ENCODE measurements at regions of chr10 and their contacts with region 1.

Region 1: DNA sequence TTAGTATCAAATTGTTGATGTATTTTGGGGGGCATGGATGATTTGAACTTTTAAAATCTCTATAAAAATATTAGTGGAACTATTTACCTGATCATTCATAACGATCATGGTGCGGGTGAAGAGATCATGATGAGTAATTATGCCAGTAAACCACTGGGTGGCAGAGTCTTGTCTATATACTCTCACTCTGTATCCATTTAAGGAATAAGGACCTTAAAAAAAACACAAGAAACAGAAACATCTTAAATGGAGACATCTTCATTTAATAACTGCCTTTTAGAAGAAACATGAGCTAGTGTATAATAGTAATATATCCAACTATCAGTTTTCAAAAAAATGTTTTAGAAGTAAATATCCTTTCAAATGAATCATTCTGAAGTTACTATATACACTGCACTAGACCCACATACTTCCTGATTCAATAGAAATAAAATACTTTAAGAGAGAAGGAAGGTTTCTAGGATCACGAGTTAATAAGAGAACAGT is 84.0 kb downstream of the NRBF2 start:
- DNase-seq: peak in 7 of 9 donors; percentile 45 to 72 (median 61)
- ATAC-seq: peak; percentile 86
- H3K4me3 ChIP-seq: no peak overlapping the region
- H3K4me3 Mint-ChIP-seq: peak overlapping the region in 7 of 10 donors; percentile 2 to 56 (median 35)
- H3K27ac ChIP-seq: no peak overlapping the region
- H3K27ac Mint-ChIP-seq: peak overlapping the region in 8 of 9 donors; percentile 29 to 88 (median 56)
- H3K4me1 ChIP-seq: peaks cover 17 to 24% of the 10 kb centered on the region in 2 donors
- H3K4me1 Mint-ChIP-seq: peaks cover 38 to 64% (median 61%) of the 10 kb centered on the region in 7 donors
- H3K27me3 ChIP-seq: no peaks in the 10 kb centered on the region
- H3K27me3 Mint-ChIP-seq: no peaks in the 10 kb centered on the region

Region 2: GRCh38 chr10:63236113-63236935 is 19.2 kb after region 1 on chr10:
- CTCF ChIA-PET with region 1: no interaction called
- POLR2A ChIA-PET with region 1: no interaction called
- intact Hi-C with region 1: loop called in 1 of 2 experiments (anchors 2 kb)
- DNase-seq: no peak
- ATAC-seq: peak; percentile 82
- H3K4me3 ChIP-seq: no peak overlapping the region
- H3K4me3 Mint-ChIP-seq: peak overlapping the region in 4 of 10 donors; percentile 14 to 51 (median 40)
- H3K27ac ChIP-seq: no peak overlapping the region
- H3K27ac Mint-ChIP-seq: peak overlapping the region in 4 of 9 donors; percentile 5 to 73 (median 20)
- H3K4me1 ChIP-seq: peaks cover 35 to 36% of the 10 kb centered on the region in 2 donors
- H3K4me1 Mint-ChIP-seq: peaks cover 33 to 82% (median 65%) of the 10 kb centered on the region in 7 donors
- H3K27me3 ChIP-seq: no peaks in the 10 kb centered on the region
- H3K27me3 Mint-ChIP-seq: no peaks in the 10 kb centered on the region

Region 3: GRCh38 chr10:63388421-63389031 is 171.4 kb after region 1 on chr10:
- CTCF ChIA-PET with region 1: interaction called, 3 read pairs
- POLR2A ChIA-PET with region 1: no interaction called
- intact Hi-C with region 1: loop called in 1 of 2 experiments (anchors 5 kb)
- DNase-seq: peak in 6 of 9 donors; percentile 20 to 60 (median 47)
- ATAC-seq: peak; percentile 77
- H3K4me3 ChIP-seq: peak overlapping the region; percentile 36
- H3K4me3 Mint-ChIP-seq: peak overlapping the region; percentile 42 to 81 (median 72)
- H3K27ac ChIP-seq: peak overlapping the region; percentile 5
- H3K27ac Mint-ChIP-seq: peak overlapping the region; percentile 21 to 76 (median 49)
- H3K4me1 ChIP-seq: peaks cover 12 to 21% of the 10 kb centered on the region in 2 donors
- H3K4me1 Mint-ChIP-seq: peaks cover 45 to 79% (median 69%) of the 10 kb centered on the region in 7 donors
- H3K27me3 ChIP-seq: no peaks in the 10 kb centered on the region
- H3K27me3 Mint-ChIP-seq: no peaks in the 10 kb centered on the region

Region 4: DNA sequence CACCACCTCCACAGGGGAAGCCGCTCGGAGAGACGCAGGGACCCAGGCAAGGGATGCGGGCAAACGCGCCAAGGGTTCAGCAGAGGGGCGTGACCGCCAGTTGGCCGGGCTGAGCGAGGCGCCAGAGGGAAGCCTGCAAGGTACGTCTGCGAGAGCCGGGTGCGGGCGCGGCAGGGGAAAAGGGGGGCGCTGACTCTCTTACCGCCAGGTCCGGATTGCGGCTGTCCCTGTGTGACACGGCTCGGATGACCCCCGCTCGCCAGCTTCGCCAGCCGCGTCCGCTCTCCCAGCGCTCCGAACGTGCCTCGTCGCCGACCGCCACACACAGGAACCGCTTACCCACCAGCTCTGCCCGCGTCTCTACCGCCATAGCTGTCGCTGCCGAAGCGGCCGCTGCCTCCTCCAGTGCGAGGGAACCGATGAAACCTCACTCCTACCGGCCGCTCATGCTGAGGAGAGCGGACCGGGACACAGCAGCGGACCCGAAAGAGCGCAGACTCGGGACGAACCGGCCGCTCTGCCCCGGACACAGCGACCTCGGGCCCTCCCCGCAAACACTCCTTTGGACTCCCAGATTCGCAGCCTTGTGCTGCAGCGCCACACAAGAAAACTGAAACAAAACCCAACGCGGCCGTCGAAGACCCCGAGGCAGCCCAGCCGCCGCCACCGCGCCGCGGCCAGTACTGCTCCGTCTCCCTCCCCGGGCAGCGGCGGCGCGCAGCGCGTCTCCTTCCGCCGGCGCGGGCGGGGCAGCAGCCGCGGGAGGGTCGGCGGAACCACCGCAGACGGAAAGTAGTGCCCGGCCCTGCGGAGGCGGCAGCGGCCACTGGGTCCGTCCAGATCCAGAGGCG is 248.4 kb after region 1 on chr10 and contains the start of gene JMJD1C:
- CTCF ChIA-PET with region 1: interaction called, 3 read pairs
- POLR2A ChIA-PET with region 1: no interaction called
- intact Hi-C with region 1: loop called (anchors 1 to 5 kb)
- DNase-seq: peak; percentile 49 to 72 (median 63)
- ATAC-seq: peak; percentile 85
- H3K4me3 ChIP-seq: peak within 1 kb of the TSS; percentile 89
- H3K4me3 Mint-ChIP-seq: peak within 1 kb of the TSS; percentile 88 to 98 (median 95)
- H3K27ac ChIP-seq: peak within 1 kb of the TSS; percentile 86
- H3K27ac Mint-ChIP-seq: peak within 1 kb of the TSS; percentile 68 to 97 (median 94)
- H3K4me1 ChIP-seq: peaks cover 0 to 16% of the 10 kb centered on the region in 2 donors
- H3K4me1 Mint-ChIP-seq: peaks cover 14 to 68% (median 34%) of the 10 kb centered on the region in 7 donors
- H3K27me3 ChIP-seq: no peaks in the 10 kb centered on the region
- H3K27me3 Mint-ChIP-seq: peaks cover 0 to 31% (median 0%) of the 10 kb centered on the region in 5 donors
- total RNA-seq, gene JMJD1C: 67.6 to 331 (median 137) TPM

Region 5: DNA sequence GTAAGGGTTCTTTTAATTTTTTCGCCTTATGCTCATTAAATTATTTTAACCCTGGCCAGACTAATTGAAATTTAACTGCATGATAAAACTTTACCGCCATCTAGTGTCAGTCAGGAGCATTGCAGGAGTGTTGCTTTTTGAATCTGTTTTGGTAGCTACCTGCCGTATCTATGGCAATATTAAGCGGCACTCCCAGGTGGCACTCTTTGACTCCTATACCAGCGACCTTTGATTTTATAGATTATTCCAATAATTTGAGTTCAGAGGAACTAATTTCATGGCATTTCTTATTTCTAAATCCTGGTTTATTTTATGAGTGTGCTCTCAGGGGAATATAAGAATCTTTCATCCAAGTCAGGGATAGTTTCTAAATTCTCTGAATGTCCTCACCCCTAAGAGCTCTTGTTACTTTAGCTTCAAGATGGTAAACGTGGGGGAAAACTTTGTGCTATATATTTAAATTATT is 502.9 kb after region 1 on chr10:
- CTCF ChIA-PET with region 1: interaction called, 16 read pairs
- POLR2A ChIA-PET with region 1: no interaction called
- intact Hi-C with region 1: loop called (anchors 1 kb)
- DNase-seq: peak in 8 of 9 donors; percentile 33 to 74 (median 63)
- ATAC-seq: peak; percentile 87
- H3K4me3 ChIP-seq: no peak overlapping the region
- H3K4me3 Mint-ChIP-seq: peak overlapping the region in 3 of 10 donors; percentile 8 to 63 (median 16)
- H3K27ac ChIP-seq: no peak overlapping the region
- H3K27ac Mint-ChIP-seq: peak overlapping the region in 5 of 9 donors; percentile 1 to 71 (median 68)
- H3K4me1 ChIP-seq: no peaks in the 10 kb centered on the region
- H3K4me1 Mint-ChIP-seq: peaks cover 0 to 22% (median 7%) of the 10 kb centered on the region in 7 donors
- H3K27me3 ChIP-seq: no peaks in the 10 kb centered on the region
- H3K27me3 Mint-ChIP-seq: peaks cover 2 to 11% (median 3%) of the 10 kb centered on the region in 5 donors